ENCODE measurements at regions of chr3 and their contacts with region 1.

Region 1: GRCh38 chr3:115975353-115975752 is 352.0 kb downstream of the GAP43 start:
- DNase-seq: no peak

Region 2: GRCh38 chr3:115958526-115958925 is 16.8 kb before region 1 on chr3:
- intact Hi-C with region 1: loop called in 1 of 2 experiments (anchors 2 kb)
- DNase-seq: no peak

Region 3: DNA sequence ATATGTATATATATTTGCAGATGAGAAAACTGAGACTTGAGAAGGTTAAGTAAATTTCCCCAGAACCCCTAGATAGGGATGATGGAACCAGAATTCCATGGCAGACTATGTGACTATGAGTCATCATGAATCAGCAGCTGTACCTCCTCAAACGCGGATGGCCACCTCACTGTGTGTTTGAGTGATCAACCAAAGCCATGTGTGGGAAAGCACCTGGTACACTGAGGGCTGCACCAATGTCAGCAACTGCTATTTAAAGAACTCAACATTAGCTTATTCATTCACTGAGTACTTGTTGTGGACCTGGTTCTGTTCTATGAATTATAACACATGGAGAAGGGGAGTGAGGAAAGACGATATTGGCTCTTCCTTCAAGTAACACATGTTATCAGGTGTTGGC is 25.0 kb after region 1 on chr3:
- intact Hi-C with region 1: loop called in 1 of 2 experiments (anchors 2 kb)
- DNase-seq: no peak